ENCODE measurements at regions of chr17 and their contacts with region 1.

Region 1: DNA sequence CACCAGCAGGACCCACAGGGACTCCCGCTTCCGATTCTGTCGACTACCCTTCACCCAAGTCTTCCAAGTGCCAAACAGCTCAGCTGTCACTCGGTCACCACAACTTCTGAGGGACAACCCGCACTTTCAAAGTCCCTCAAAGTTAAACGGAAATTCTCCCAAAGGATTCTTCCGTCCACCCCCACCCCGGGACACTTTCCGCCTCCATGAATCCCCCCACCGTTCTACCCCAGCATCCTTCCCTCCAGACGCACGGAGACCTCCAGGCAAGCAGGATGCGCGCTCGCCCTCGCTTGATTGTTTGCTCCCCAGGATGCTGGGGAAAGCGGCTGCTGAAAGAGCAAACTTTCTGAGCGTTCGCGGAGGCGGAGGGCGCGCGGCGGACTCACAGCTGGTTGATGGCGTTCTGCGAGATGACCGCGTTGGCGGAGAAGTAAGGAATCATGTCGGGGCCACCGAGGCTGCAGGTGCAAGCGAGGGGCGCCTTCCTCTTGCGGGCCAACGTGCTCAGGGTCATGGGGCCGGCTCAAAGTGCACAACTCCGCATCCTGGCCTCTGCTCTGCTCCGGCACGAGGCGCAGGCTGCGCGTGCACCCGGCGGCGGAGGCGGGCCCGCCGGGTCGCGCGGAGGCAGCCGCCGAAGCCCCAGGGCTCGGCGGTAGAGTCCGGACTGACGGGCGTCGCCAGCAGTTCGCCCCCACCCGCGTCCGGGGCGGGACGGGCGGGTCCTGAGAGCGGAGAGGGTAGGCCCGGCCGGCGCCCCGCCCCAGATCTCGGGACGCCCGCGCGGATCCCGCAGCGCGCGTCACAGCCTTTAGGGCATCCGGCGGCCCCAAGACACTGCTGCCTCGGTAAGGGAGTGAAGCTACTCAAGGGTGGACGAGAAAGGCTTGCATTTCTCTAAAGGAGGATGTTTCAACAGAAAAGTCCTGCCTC is 138.3 kb upstream of the CORO6 start:
- DNase-seq: peak; percentile 82
- H3K4me3 Mint-ChIP-seq: peak overlapping the region; percentile 88
- H3K27ac Mint-ChIP-seq: peak overlapping the region; percentile 18
- H3K4me1 Mint-ChIP-seq: peaks cover 15% of the 10 kb centered on the region
- H3K27me3 Mint-ChIP-seq: no peaks in the 10 kb centered on the region
- CTCF ChIP-seq: no peak

Region 2: GRCh38 chr17:29640413-29640812 is 120.6 kb before region 1 on chr17:
- CTCF ChIA-PET with region 1: interaction called, 12 read pairs
- intact Hi-C with region 1: loop called (anchors 5 kb)
- DNase-seq: no peak
- H3K4me3 Mint-ChIP-seq: no peak overlapping the region
- H3K27ac Mint-ChIP-seq: no peak overlapping the region
- H3K4me1 Mint-ChIP-seq: peaks cover 18% of the 10 kb centered on the region
- H3K27me3 Mint-ChIP-seq: no peaks in the 10 kb centered on the region
- CTCF ChIP-seq: no peak